Naive thymus-derived CD4-positive, alpha-beta T cell (primary cell): ENCODE measurements at regions of chr6 and their contacts with region 1.

Region 1: DNA sequence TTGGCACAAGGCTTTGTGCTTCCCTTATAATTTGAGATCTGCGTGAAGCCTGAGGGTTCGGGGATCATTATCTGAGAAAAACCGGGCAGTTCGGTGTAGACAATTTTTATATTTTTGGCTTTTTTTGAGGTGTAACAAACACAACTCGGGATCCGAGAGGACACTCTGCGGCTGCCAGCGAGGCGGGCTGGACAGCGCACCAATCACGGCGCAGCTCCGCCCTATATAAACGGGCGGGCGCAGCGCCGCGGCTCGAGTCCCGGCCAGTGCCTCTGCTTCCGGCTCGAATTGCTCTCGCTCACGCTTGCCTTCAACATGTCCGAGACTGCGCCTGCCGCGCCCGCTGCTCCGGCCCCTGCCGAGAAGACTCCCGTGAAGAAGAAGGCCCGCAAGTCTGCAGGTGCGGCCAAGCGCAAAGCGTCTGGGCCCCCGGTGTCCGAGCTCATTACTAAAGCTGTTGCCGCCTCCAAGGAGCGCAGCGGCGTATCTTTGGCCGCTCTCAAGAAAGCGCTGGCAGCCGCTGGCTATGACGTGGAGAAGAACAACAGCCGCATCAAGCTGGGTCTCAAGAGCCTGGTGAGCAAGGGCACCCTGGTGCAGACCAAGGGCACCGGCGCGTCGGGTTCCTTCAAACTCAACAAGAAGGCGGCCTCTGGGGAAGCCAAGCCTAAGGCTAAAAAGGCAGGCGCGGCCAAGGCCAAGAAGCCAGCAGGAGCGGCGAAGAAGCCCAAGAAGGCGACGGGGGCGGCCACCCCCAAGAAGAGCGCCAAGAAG is 69.0 kb downstream of the HFE start:
- DNase-seq: peak; percentile 80 to 92 (median 88)
- ATAC-seq: peak; percentile 61
- H3K4me3 ChIP-seq: peak overlapping the region; percentile 82
- H3K4me3 Mint-ChIP-seq: peak overlapping the region; percentile 96 to 100 (median 98)
- H3K27ac ChIP-seq: peak overlapping the region; percentile 92
- H3K27ac Mint-ChIP-seq: peak overlapping the region; percentile 95 to 99 (median 98)
- H3K4me1 ChIP-seq: peaks cover 19 to 23% of the 10 kb centered on the region in 2 donors
- H3K4me1 Mint-ChIP-seq: peaks cover 16 to 58% (median 30%) of the 10 kb centered on the region in 7 donors
- H3K27me3 ChIP-seq: no peaks in the 10 kb centered on the region
- H3K27me3 Mint-ChIP-seq: peaks cover 0 to 33% (median 0%) of the 10 kb centered on the region in 5 donors

Region 2: GRCh38 chr6:25953733-25954132 is 202.5 kb before region 1 on chr6:
- CTCF ChIA-PET with region 1: no interaction called
- POLR2A ChIA-PET with region 1: no interaction called
- intact Hi-C with region 1: no loop called
- DNase-seq: no peak
- ATAC-seq: no peak
- H3K4me3 ChIP-seq: no peak overlapping the region
- H3K4me3 Mint-ChIP-seq: no peak overlapping the region
- H3K27ac ChIP-seq: no peak overlapping the region
- H3K27ac Mint-ChIP-seq: no peak overlapping the region
- H3K4me1 ChIP-seq: peaks cover 2 to 4% of the 10 kb centered on the region in 2 donors
- H3K4me1 Mint-ChIP-seq: peaks cover 5 to 10% (median 7%) of the 10 kb centered on the region in 7 donors
- H3K27me3 ChIP-seq: no peaks in the 10 kb centered on the region
- H3K27me3 Mint-ChIP-seq: peaks cover 0 to 6% (median 0%) of the 10 kb centered on the region in 5 donors

Region 3: DNA sequence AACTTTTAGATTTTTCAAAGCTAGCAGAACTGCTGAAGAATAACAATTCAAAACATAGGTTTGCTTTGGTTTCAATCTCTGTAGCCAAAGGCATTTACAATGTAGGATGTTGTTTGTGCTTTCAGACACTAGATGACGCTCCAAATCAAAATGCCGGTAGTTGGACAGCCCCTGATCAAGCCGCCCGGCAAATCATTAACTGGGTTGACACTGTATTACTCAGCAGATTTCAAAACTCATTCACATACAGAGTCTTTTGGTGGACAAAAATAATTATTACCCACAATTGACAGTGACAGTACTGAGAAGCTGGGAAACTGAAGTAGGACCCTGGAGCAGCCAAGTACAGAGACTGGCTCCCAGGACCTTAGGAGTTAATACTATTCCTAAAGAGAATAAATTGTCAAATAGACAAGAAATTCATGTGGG is 90.3 kb before region 1 on chr6:
- CTCF ChIA-PET with region 1: interaction called, 4 read pairs
- POLR2A ChIA-PET with region 1: interaction called, 85 read pairs
- intact Hi-C with region 1: no loop called
- DNase-seq: peak in 7 of 9 donors; percentile 51 to 74 (median 61)
- ATAC-seq: peak; percentile 97
- H3K4me3 ChIP-seq: no peak overlapping the region
- H3K4me3 Mint-ChIP-seq: no peak overlapping the region
- H3K27ac ChIP-seq: no peak overlapping the region
- H3K27ac Mint-ChIP-seq: no peak overlapping the region
- H3K4me1 ChIP-seq: no peaks in the 10 kb centered on the region
- H3K4me1 Mint-ChIP-seq: peaks cover 1 to 22% (median 11%) of the 10 kb centered on the region in 7 donors
- H3K27me3 ChIP-seq: no peaks in the 10 kb centered on the region
- H3K27me3 Mint-ChIP-seq: peaks cover 0 to 39% (median 0%) of the 10 kb centered on the region in 5 donors

Region 4: GRCh38 chr6:26130254-26131249 is 25.7 kb before region 1 on chr6:
- CTCF ChIA-PET with region 1: interaction called, 70 read pairs
- POLR2A ChIA-PET with region 1: interaction called, 2,532 read pairs
- intact Hi-C with region 1: no loop called
- DNase-seq: no peak
- ATAC-seq: no peak
- H3K4me3 ChIP-seq: no peak overlapping the region
- H3K4me3 Mint-ChIP-seq: peak overlapping the region in 7 of 10 donors; percentile 20 to 55 (median 49)
- H3K27ac ChIP-seq: no peak overlapping the region
- H3K27ac Mint-ChIP-seq: peak overlapping the region in 7 of 9 donors; percentile 22 to 79 (median 61)
- H3K4me1 ChIP-seq: peaks cover 14 to 16% of the 10 kb centered on the region in 2 donors
- H3K4me1 Mint-ChIP-seq: peaks cover 32 to 87% (median 70%) of the 10 kb centered on the region in 7 donors
- H3K27me3 ChIP-seq: no peaks in the 10 kb centered on the region
- H3K27me3 Mint-ChIP-seq: peaks cover 0 to 1% (median 0%) of the 10 kb centered on the region in 5 donors

Region 5: DNA sequence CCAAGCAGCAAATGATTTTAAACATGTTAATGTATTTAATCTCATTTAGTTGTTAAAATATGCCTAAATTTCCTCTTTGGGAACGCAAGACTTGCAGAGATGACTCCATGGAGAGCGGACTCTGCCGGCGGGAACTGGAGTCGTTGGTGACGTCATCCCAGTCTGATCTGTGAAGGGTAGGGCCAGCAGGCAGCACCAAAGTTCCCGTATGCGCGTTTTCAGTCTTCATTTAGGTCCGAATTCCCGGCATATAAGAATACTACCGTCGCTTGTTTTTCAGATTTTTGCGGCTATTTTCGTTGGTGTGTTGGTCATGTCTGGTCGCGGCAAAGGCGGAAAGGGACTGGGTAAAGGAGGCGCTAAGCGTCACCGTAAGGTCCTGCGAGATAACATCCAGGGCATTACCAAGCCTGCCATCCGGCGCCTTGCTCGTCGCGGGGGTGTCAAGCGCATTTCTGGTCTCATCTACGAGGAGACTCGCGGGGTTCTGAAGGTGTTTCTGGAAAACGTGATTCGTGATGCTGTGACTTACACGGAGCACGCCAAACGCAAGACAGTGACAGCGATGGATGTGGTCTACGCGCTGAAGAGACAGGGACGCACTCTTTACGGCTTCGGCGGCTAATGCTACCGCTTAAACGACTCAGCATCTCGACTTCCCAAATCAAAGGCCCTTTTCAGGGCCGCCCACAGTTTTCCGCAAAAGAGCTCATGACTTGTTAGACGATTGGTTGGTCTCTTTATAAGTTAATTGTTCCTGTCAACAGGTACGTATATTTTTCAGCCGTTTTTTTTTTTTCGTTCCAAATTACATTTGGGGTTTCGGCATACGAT is 48.3 kb after region 1 on chr6:
- CTCF ChIA-PET with region 1: interaction called, 32 read pairs
- POLR2A ChIA-PET with region 1: interaction called, 2,611 read pairs
- intact Hi-C with region 1: loop called (anchors 1 kb)
- DNase-seq: peak; percentile 67 to 95 (median 89)
- ATAC-seq: peak; percentile 72
- H3K4me3 ChIP-seq: peak overlapping the region; percentile 77
- H3K4me3 Mint-ChIP-seq: no peak overlapping the region
- H3K27ac ChIP-seq: peak overlapping the region; percentile 90
- H3K27ac Mint-ChIP-seq: no peak overlapping the region
- H3K4me1 ChIP-seq: peaks cover 20 to 23% of the 10 kb centered on the region in 2 donors
- H3K4me1 Mint-ChIP-seq: peaks cover 9 to 36% (median 26%) of the 10 kb centered on the region in 7 donors
- H3K27me3 ChIP-seq: no peaks in the 10 kb centered on the region
- H3K27me3 Mint-ChIP-seq: peaks cover 0 to 5% (median 0%) of the 10 kb centered on the region in 5 donors

Region 6: DNA sequence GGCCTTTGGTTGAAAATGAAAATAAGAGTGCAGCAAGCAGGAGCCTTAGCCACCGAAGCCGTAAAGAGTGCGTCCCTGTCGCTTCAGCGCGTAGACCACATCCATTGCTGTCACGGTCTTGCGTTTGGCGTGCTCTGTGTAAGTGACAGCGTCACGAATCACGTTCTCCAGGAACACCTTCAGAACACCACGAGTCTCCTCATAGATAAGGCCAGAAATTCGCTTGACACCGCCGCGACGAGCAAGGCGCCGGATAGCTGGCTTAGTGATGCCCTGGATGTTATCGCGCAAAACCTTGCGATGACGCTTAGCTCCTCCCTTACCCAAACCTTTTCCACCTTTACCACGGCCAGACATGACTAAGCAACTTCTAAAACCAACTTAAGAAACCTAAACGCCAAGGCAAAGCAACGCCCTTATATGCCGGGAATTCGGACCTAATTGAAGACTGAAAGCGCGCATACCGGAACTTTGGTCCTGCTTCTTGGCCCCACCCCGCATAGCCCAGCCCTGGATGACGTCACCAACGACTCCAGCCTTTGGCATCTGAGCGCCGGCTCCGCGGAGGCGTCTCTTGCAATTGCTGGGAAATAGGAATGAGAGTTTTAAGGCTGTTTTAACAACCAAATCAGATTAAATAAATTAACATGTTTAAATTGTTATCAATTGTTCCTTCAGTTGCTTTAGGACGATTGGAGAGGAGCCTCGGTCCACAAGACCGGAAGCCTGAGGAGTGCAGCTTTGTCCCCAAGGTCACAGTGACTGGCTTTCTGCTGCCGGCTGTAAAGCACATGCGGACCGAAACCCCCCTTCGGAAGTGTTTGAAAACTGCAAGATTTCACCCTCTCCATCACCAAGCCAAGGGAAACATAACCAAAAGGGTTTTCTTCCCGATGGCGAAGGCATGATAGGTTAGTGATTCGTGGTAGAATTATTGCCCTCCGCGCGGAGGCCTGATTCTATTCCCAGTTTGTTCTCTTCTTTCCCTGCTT is 129.2 kb after region 1 on chr6:
- CTCF ChIA-PET with region 1: no interaction called
- POLR2A ChIA-PET with region 1: interaction called, 80 read pairs
- intact Hi-C with region 1: loop called (anchors 1 kb)
- DNase-seq: peak; percentile 72 to 97 (median 92)
- ATAC-seq: peak; percentile 91
- H3K4me3 ChIP-seq: peak overlapping the region; percentile 88
- H3K4me3 Mint-ChIP-seq: peak overlapping the region; percentile 86 to 96 (median 90)
- H3K27ac ChIP-seq: peak overlapping the region; percentile 91
- H3K27ac Mint-ChIP-seq: peak overlapping the region; percentile 91 to 100 (median 98)
- H3K4me1 ChIP-seq: peaks cover 0 to 8% of the 10 kb centered on the region in 2 donors
- H3K4me1 Mint-ChIP-seq: peaks cover 7 to 48% (median 33%) of the 10 kb centered on the region in 7 donors
- H3K27me3 ChIP-seq: no peaks in the 10 kb centered on the region
- H3K27me3 Mint-ChIP-seq: peaks cover 0 to 9% (median 5%) of the 10 kb centered on the region in 5 donors

Region 7: GRCh38 chr6:26520853-26521599 is 364.8 kb after region 1 on chr6:
- CTCF ChIA-PET with region 1: no interaction called
- POLR2A ChIA-PET with region 1: no interaction called
- intact Hi-C with region 1: no loop called
- DNase-seq: peak; percentile 74 to 90 (median 87)
- ATAC-seq: peak; percentile 84
- H3K4me3 ChIP-seq: peak overlapping the region; percentile 61
- H3K4me3 Mint-ChIP-seq: peak overlapping the region; percentile 73 to 100 (median 91)
- H3K27ac ChIP-seq: peak overlapping the region; percentile 69
- H3K27ac Mint-ChIP-seq: peak overlapping the region; percentile 91 to 98 (median 97)
- H3K4me1 ChIP-seq: peaks cover 8 to 15% of the 10 kb centered on the region in 2 donors
- H3K4me1 Mint-ChIP-seq: peaks cover 6 to 42% (median 35%) of the 10 kb centered on the region in 7 donors
- H3K27me3 ChIP-seq: no peaks in the 10 kb centered on the region
- H3K27me3 Mint-ChIP-seq: peaks cover 0 to 6% (median 0%) of the 10 kb centered on the region in 5 donors

Region 8: GRCh38 chr6:26613689-26614683 is 457.7 kb after region 1 on chr6:
- CTCF ChIA-PET with region 1: no interaction called
- POLR2A ChIA-PET with region 1: no interaction called
- intact Hi-C with region 1: no loop called
- DNase-seq: peak in 4 of 9 donors; percentile 31 to 41 (median 34)
- ATAC-seq: peak; percentile 37
- H3K4me3 ChIP-seq: peak overlapping the region; percentile 67
- H3K4me3 Mint-ChIP-seq: peak overlapping the region; percentile 75 to 93 (median 86)
- H3K27ac ChIP-seq: no peak overlapping the region
- H3K27ac Mint-ChIP-seq: peak overlapping the region in 4 of 9 donors; percentile 60 to 87 (median 72)
- H3K4me1 ChIP-seq: peaks cover 0 to 15% of the 10 kb centered on the region in 2 donors
- H3K4me1 Mint-ChIP-seq: peaks cover 10 to 30% (median 24%) of the 10 kb centered on the region in 7 donors
- H3K27me3 ChIP-seq: peaks cover 7 to 10% of the 10 kb centered on the region in 2 donors
- H3K27me3 Mint-ChIP-seq: peaks cover 10 to 57% (median 32%) of the 10 kb centered on the region in 5 donors

Region 9: DNA sequence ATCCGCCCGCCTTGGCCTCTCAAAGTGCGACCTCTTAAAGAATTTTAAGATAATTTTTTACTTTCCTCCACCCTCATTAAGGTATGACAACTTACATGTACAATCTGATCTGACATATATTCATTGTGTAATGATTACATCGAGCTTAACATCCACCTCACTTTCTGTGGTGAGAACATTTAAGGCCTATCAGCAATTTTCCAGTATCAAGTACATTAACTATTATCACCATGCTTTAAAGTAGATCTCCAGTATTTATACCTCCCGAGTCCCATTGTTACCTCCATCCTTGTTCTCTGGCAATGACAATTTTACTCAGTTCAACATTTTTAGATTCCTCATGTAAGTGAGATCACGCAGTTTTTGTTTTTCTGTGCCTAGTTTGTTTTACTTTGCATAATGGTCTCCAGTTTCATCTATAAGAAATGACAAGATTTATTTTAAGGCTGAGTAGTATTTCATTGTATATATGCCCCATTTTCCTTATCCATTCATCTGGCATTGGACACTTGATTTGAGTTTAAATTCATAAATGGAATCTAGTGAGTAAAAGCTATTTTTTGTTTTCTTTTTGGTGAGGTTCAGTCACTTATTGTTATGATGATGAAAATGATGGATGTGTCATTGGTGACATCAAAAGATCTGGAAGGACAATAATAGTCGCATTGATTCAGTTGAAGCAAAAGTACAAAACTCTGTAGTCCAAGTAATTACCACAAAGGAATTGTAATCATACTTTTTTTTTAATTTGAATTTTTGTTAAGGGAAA is 1668.9 kb after region 1 on chr6:
- CTCF ChIA-PET with region 1: no interaction called
- POLR2A ChIA-PET with region 1: interaction called, 23 read pairs
- intact Hi-C with region 1: no loop called
- DNase-seq: no peak
- ATAC-seq: no peak
- H3K4me3 ChIP-seq: peak overlapping the region; percentile 87
- H3K4me3 Mint-ChIP-seq: peak overlapping the region; percentile 82 to 99 (median 94)
- H3K27ac ChIP-seq: peak overlapping the region; percentile 89
- H3K27ac Mint-ChIP-seq: peak overlapping the region; percentile 90 to 100 (median 98)
- H3K4me1 ChIP-seq: peaks cover 6% of the 10 kb centered on the region in 2 donors
- H3K4me1 Mint-ChIP-seq: peaks cover 11 to 50% (median 33%) of the 10 kb centered on the region in 7 donors
- H3K27me3 ChIP-seq: no peaks in the 10 kb centered on the region
- H3K27me3 Mint-ChIP-seq: peaks cover 0 to 4% (median 0%) of the 10 kb centered on the region in 5 donors